ENCODE measurements at regions of chr1 and their contacts with region 1.

Region 1: GRCh38 chr1:24150234-24151174 is 7.6 kb upstream of the IL22RA1 start:
- DNase-seq: peak; percentile 24
- ATAC-seq: peak; percentile 98
- H3K4me3 ChIP-seq: no peak overlapping the region
- H3K27ac ChIP-seq: no peak overlapping the region
- H3K4me1 ChIP-seq: peaks cover 11% of the 10 kb centered on the region
- H3K27me3 ChIP-seq: peaks cover 3 to 4% of the 10 kb centered on the region in 2 experiments; a peak in 3 of 4 replicates
- CTCF ChIP-seq: peak; percentile 76 to 93 (median 87)
- EP300 ChIP-seq: no peak
- POLR2A ChIP-seq: no peak
- RAD21 ChIP-seq: peak; percentile 91

Region 2: GRCh38 chr1:23727362-23727827 is 423.1 kb before region 1 on chr1:
- CTCF ChIA-PET with region 1: no interaction called
- POLR2A ChIA-PET with region 1: no interaction called
- RAD21 ChIA-PET with region 1: no interaction called
- SMC1A ChIA-PET with region 1: no interaction called
- in situ Hi-C with region 1: no loop called
- intact Hi-C with region 1: no loop called
- DNase-seq: no peak
- ATAC-seq: peak; percentile 64
- H3K4me3 ChIP-seq: no peak overlapping the region; the same call in 1 of the 2 replicates
- H3K27ac ChIP-seq: peak overlapping the region; percentile 91
- H3K4me1 ChIP-seq: peaks cover 55% of the 10 kb centered on the region
- H3K27me3 ChIP-seq: no peaks in the 10 kb centered on the region
- CTCF ChIP-seq: peak in 1 of 3 experiments; percentile 21; a peak in 1 of 6 replicates
- EP300 ChIP-seq: no peak
- POLR2A ChIP-seq: no peak
- RAD21 ChIP-seq: 0 out of 2 replicates have a peak, but pooled peaks have one; percentile 24

Region 3: DNA sequence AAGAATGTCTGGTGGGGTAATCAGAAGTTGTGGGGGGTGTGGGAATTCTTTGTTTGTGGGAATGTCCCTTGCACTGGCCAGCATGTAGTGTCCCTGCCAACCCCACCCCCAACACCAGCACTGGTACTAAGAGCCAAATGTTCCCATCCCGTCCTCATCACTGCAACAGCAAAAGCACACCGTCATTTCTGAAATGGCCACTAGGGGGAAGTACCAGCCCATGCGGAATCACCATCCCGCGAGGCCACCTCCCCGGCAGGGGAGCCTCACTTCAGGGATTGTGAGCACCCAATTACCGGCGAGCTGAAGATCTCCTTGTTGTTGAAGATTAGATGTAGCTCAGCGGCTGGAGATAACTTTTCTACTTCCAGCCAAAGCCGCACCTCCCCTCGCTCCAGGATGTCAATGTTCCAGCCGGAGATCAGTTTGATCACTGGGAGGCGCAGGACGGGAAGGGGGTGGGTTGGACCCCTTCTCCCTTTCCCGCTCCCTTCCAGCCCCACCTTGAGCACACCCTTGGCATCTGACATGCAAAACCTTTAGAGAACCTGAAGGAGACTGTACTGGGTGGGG is 79.6 kb before region 1 on chr1:
- CTCF ChIA-PET with region 1: interaction called, 3 read pairs
- POLR2A ChIA-PET with region 1: no interaction called
- RAD21 ChIA-PET with region 1: no interaction called
- SMC1A ChIA-PET with region 1: no interaction called
- in situ Hi-C with region 1: no loop called
- intact Hi-C with region 1: loop called (anchors 5 kb)
- DNase-seq: peak; percentile 12
- ATAC-seq: peak; percentile 98
- H3K4me3 ChIP-seq: no peak overlapping the region
- H3K27ac ChIP-seq: no peak overlapping the region
- H3K4me1 ChIP-seq: no peaks in the 10 kb centered on the region
- H3K27me3 ChIP-seq: peaks cover 0 to 6% of the 10 kb centered on the region in 2 experiments; a peak in 2 of 4 replicates
- CTCF ChIP-seq: peak; percentile 84 to 92 (median 91)
- EP300 ChIP-seq: no peak
- POLR2A ChIP-seq: no peak
- RAD21 ChIP-seq: peak; percentile 82

Region 4: GRCh38 chr1:24172598-24172997 is 22.1 kb after region 1 on chr1:
- CTCF ChIA-PET with region 1: interaction called, 10 read pairs
- POLR2A ChIA-PET with region 1: no interaction called
- RAD21 ChIA-PET with region 1: interaction called, 4 read pairs
- SMC1A ChIA-PET with region 1: interaction called, 3 read pairs
- in situ Hi-C with region 1: no loop called
- intact Hi-C with region 1: no loop called
- DNase-seq: no peak
- ATAC-seq: no peak
- H3K4me3 ChIP-seq: no peak overlapping the region
- H3K27ac ChIP-seq: no peak overlapping the region
- H3K4me1 ChIP-seq: peaks cover 6% of the 10 kb centered on the region
- H3K27me3 ChIP-seq: peaks cover 0 to 2% of the 10 kb centered on the region in 2 experiments; a peak in 1 of 4 replicates
- CTCF ChIP-seq: no peak
- EP300 ChIP-seq: no peak
- POLR2A ChIP-seq: no peak
- RAD21 ChIP-seq: no peak

Region 5: DNA sequence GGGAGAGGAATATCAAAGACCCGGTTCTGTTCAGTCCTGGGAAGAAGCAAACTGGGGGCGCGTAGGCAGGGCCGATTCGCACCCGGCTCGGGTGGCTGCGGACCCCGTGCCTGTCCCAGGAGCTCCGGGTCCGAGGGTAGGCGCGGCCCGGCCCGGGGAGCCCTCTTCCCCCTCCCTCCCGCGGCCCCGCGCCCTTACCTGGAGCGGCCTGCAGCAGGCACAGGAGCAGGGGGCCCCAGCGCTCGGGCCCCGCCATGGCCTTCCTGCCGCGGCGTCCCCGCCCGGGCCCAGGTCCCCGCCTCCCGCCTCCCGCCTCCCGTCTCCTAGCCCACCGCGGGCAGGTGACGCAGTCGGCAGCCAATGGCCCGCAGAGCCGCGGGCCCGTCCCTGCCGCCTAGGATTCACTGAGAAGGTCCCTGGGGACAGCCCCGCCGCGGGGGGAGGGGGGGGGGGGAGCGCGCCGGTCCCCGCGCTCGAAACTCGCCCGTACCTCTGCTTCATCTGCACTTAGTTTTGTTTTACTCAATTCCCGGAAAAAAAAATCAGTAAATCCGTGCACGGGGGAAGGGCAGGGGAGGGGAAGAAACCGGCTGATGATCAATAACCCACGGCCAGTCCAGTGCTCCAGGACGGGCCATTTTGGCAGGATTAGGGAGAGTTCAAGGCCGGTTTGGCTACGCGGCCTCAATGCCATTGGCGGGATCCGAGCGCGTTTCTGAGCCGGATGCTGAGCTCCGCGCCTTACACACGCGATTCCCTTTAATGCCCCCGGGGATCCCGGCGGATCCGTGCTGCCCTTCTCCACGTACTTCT is 36.7 kb after region 1 on chr1 and contains the start of gene IFNLR1:
- CTCF ChIA-PET with region 1: interaction called, 15 read pairs
- POLR2A ChIA-PET with region 1: interaction called, 4 read pairs
- RAD21 ChIA-PET with region 1: interaction called, 11 read pairs
- SMC1A ChIA-PET with region 1: interaction called, 16 read pairs
- in situ Hi-C with region 1: no loop called
- intact Hi-C with region 1: no loop called
- DNase-seq: no peak
- ATAC-seq: peak; percentile 52
- H3K4me3 ChIP-seq: peak within 1 kb of the TSS; percentile 71; the same call in 1 of the 2 replicates
- H3K27ac ChIP-seq: peak within 1 kb of the TSS; percentile 5; the same call in 1 of the 2 replicates
- H3K4me1 ChIP-seq: peaks cover 47% of the 10 kb centered on the region
- H3K27me3 ChIP-seq: peaks cover 0 to 4% of the 10 kb centered on the region in 2 experiments; a peak in 2 of 4 replicates
- CTCF ChIP-seq: no peak
- EP300 ChIP-seq: no peak
- POLR2A ChIP-seq: peak; percentile 68
- RAD21 ChIP-seq: no peak
- polyA plus RNA-seq, gene IFNLR1: 0.31 to 0.88 TPM

Region 6: DNA sequence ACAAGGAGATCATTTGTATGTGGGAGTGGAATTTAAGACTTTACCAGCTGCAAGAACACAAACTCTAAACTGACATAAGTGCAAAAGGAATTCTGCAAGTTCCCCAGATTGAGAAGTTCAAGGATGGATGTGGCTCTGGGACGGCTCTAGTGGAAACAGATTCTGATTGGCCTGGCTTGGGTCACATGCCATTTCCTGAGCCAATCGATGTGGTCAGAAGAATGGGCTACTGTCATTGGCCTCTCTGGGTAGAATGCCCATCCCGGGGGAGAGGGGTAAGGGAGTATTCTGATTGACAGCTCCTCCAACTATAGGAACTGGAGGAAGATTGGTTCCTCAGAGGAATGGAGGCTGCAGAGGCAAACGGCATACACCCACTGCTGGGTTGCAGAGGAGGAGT is 42.5 kb after region 1 on chr1:
- CTCF ChIA-PET with region 1: interaction called, 83 read pairs
- POLR2A ChIA-PET with region 1: no interaction called
- RAD21 ChIA-PET with region 1: interaction called, 11 read pairs
- SMC1A ChIA-PET with region 1: interaction called, 30 read pairs
- in situ Hi-C with region 1: no loop called
- intact Hi-C with region 1: loop called (anchors 2 kb)
- DNase-seq: no peak
- ATAC-seq: no peak
- H3K4me3 ChIP-seq: no peak overlapping the region
- H3K27ac ChIP-seq: no peak overlapping the region
- H3K4me1 ChIP-seq: peaks cover 49% of the 10 kb centered on the region
- H3K27me3 ChIP-seq: no peaks in the 10 kb centered on the region
- CTCF ChIP-seq: no peak
- EP300 ChIP-seq: no peak
- POLR2A ChIP-seq: no peak
- RAD21 ChIP-seq: no peak

Measured in GM12878 (cell line).